ENCODE measurements at regions of chr12 and their contacts with region 1.

Region 1: GRCh38 chr12:94140556-94140955 is 7.8 kb upstream of the PLXNC1 start:
- DNase-seq: no peak
- ATAC-seq: peak in 1 of 2 donors; percentile 40

Region 2: DNA sequence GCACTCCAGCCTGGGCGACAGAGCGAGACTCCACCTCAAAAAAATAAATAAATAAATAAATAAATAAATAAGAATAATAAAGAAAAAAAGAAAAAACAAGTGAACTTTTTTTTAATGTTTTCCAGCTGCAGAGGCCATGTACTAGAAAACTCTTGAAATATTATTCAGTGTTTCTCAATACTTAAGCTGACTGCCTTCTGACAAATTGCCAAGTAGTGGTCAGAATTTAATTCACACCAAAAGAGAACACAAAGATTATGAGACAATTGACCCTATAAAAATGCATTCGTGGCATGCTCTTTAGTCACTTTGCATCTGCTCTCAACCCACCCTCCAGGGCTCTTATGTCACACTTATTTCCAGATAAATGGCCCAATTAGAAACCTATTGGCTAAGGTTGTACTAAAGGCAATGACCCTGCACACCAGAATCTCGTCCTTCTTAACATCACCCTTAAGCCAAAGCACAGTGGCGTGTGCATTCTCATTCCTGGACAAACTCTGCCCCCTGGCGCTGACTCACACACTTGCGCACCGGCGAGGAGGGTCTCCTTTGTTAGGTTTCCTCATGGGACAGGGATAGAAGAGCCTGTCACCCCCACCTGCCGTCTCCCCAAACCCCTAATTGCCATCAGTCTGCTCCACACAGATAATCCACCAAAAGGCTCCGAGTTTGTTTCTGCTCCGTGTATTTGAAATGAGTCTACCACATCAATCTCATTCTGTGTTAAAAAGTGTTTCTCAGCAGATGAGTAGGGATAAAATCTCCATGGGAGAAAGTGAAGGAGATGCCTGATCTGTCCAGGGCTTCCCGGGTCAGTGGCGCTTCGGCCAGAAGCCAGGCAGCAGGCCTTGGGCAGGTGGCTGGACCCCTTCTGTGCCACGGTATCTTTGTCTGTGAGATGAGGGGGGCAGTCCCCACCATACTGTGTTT is 392.2 kb after region 1 on chr12:
- intact Hi-C with region 1: loop called (anchors 2 to 5 kb)
- DNase-seq: peak; percentile 73
- ATAC-seq: peak; percentile 89 to 95